GM18951 (cell line): ENCODE measurements at regions of chr6 and their contacts with region 1.

Region 1: DNA sequence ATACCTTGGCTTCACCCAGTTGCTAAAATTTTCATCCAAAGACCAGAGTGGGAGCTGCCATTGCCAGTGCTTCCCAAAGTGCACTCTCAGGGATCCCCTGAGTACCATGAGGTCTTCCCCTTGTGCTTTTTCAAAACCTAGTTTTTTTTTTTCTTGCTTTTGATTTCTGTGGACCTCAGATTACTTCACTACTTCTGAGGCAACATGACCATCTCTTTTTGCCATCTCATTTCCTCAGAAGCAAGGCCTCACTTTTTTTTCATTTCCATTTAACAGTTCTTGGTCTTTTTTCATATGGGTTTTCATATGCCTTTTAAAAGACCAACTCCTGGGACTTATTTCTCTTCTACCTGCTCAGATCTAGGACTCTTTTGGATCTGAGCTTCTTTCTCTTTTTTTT is 64.1 kb upstream of the MMS22L start:
- POLR2A ChIP-seq: no peak

Region 2: GRCh38 chr6:97626671-97627441 is 279.7 kb after region 1 on chr6:
- in situ Hi-C with region 1: loop called (anchors 10 kb)
- POLR2A ChIP-seq: no peak